Ascending aorta (tissue), 2 donors: ENCODE measurements at regions of chr2 and their contacts with region 1.

Region 1: GRCh38 chr2:66445925-66446860 is 11.3 kb downstream of the MEIS1 start:
- DNase-seq: peak in 1 of 2 donors; percentile 89
- H3K4me3 ChIP-seq: peak overlapping the region; percentile 57 to 81
- H3K27ac ChIP-seq: peak overlapping the region; percentile 99
- H3K4me1 ChIP-seq: peaks cover 3 to 4% of the 10 kb centered on the region in 2 donors
- H3K27me3 ChIP-seq: no peaks in the 10 kb centered on the region
- CTCF ChIP-seq: peak in 2 of 3 experiments; percentile 39 to 48

Region 2: DNA sequence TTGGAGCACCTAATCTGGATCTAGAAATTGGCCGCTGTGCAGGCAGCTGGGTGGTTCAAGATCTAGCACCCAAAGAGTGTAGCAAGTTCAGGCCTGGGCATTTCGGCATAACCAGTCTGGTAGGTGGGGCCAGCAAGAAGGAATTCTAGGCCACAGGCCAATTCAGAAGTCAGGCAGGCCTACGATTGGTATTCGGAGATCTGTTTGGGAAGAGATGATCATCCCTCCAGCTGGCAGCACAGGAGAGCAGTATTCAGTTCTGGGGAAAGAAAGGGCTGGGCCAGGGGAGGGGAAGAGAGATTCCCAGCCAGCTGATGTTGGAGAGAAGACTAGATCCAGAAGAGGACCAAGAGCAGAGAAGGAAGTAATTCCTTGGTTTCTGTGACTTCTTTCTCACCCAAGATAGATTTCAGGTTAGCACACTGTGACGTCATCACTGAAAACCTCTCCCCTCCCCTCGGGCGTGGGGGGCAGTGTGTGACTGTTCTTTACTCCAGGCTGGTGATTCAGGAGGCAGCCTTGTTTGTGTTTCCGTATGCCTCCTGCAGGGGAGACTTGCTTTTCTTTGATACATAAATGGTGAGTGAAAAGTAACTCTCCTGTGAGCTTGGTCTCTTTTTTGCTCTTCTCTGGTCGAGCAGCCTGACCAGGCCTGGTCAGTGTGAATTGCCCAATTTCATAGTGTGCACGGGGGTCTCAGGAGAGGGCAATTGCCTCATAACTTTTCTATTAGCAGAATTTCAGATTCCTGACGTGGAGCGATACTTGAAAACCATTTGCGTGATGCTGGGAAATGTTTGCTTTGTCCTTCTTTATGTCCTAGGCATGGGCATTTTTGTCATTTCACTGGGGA is 49.8 kb after region 1 on chr2:
- intact Hi-C with region 1: loop called (anchors 5 kb)
- DNase-seq: peak; percentile 21 to 89
- H3K4me3 ChIP-seq: peak overlapping the region; percentile 18 to 23
- H3K27ac ChIP-seq: peak overlapping the region; percentile 68 to 70
- H3K4me1 ChIP-seq: peaks cover 11 to 34% of the 10 kb centered on the region in 2 donors
- H3K27me3 ChIP-seq: no peaks in the 10 kb centered on the region
- CTCF ChIP-seq: peak; percentile 26 to 40 (median 27)

Region 3: GRCh38 chr2:66555501-66556324 is 109.5 kb after region 1 on chr2:
- intact Hi-C with region 1: loop called (anchors 5 kb)
- DNase-seq: no peak
- H3K4me3 ChIP-seq: peak overlapping the region; percentile 23 to 59
- H3K27ac ChIP-seq: peak overlapping the region; percentile 74 to 82
- H3K4me1 ChIP-seq: peaks cover 2 to 19% of the 10 kb centered on the region in 2 donors
- H3K27me3 ChIP-seq: no peaks in the 10 kb centered on the region
- CTCF ChIP-seq: no peak

Region 4: GRCh38 chr2:68062680-68063387 is 1616.6 kb after region 1 on chr2 and contains the start of gene C1D:
- intact Hi-C with region 1: loop called (anchors 10 kb)
- DNase-seq: peak; percentile 62 to 97
- H3K4me3 ChIP-seq: peak within 1 kb of the TSS; percentile 64 to 80
- H3K27ac ChIP-seq: peak within 1 kb of the TSS; percentile 78 to 83
- H3K4me1 ChIP-seq: peaks cover 2 to 12% of the 10 kb centered on the region in 2 donors
- H3K27me3 ChIP-seq: no peaks in the 10 kb centered on the region
- CTCF ChIP-seq: no peak
- total RNA-seq, gene C1D: not detected